ENCODE measurements at regions of chr12 and their contacts with region 1.

Region 1: GRCh38 chr12:123490089-123490488 is 32.1 kb downstream of the SNRNP35 start:
- DNase-seq: peak; percentile 77 to 83
- H3K4me3 ChIP-seq: no peak overlapping the region
- H3K4me3 Mint-ChIP-seq: peak overlapping the region; percentile 47
- H3K27ac Mint-ChIP-seq: peak overlapping the region; percentile 86
- H3K4me1 ChIP-seq: peaks cover 41% of the 10 kb centered on the region
- H3K4me1 Mint-ChIP-seq: peaks cover 30% of the 10 kb centered on the region
- H3K27me3 ChIP-seq: no peaks in the 10 kb centered on the region
- H3K27me3 Mint-ChIP-seq: no peaks in the 10 kb centered on the region
- CTCF ChIP-seq: no peak

Region 2: GRCh38 chr12:123519141-123520001 is 29.3 kb after region 1 on chr12:
- CTCF ChIA-PET with region 1: interaction called, 3 read pairs
- POLR2A ChIA-PET with region 1: no interaction called
- intact Hi-C with region 1: loop called (anchors 1 kb)
- DNase-seq: peak; percentile 90 to 91
- H3K4me3 ChIP-seq: no peak overlapping the region
- H3K4me3 Mint-ChIP-seq: peak overlapping the region; percentile 64
- H3K27ac Mint-ChIP-seq: peak overlapping the region; percentile 98
- H3K4me1 ChIP-seq: peaks cover 35% of the 10 kb centered on the region
- H3K4me1 Mint-ChIP-seq: peaks cover 32% of the 10 kb centered on the region
- H3K27me3 ChIP-seq: no peaks in the 10 kb centered on the region
- H3K27me3 Mint-ChIP-seq: no peaks in the 10 kb centered on the region
- CTCF ChIP-seq: no peak

Region 3: DNA sequence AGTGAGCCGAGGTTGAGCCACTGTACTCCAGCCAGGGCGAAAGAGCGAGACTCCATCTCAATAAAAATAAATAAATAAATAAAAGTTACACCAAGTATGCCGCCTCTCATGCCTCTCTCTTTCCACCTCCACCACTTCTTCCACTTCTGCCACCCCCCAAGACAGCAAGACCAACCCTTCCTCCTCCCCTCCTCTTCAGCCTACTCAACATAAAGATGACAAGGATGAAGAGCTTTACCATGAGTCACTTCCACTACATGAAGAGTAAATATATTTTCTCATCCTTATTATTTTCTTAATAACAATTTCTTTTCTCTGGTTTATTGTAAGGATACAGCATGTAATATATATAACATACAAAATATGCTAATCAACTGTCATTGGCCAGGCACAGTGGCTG is 90.7 kb after region 1 on chr12:
- CTCF ChIA-PET with region 1: no interaction called
- POLR2A ChIA-PET with region 1: no interaction called
- intact Hi-C with region 1: no loop called
- DNase-seq: no peak
- H3K4me3 ChIP-seq: no peak overlapping the region
- H3K4me3 Mint-ChIP-seq: no peak overlapping the region
- H3K27ac Mint-ChIP-seq: no peak overlapping the region
- H3K4me1 ChIP-seq: peaks cover 20% of the 10 kb centered on the region
- H3K4me1 Mint-ChIP-seq: peaks cover 12% of the 10 kb centered on the region
- H3K27me3 ChIP-seq: no peaks in the 10 kb centered on the region
- H3K27me3 Mint-ChIP-seq: no peaks in the 10 kb centered on the region
- CTCF ChIP-seq: no peak